ENCODE measurements at regions of chr6 and their contacts with region 1.

Region 1: DNA sequence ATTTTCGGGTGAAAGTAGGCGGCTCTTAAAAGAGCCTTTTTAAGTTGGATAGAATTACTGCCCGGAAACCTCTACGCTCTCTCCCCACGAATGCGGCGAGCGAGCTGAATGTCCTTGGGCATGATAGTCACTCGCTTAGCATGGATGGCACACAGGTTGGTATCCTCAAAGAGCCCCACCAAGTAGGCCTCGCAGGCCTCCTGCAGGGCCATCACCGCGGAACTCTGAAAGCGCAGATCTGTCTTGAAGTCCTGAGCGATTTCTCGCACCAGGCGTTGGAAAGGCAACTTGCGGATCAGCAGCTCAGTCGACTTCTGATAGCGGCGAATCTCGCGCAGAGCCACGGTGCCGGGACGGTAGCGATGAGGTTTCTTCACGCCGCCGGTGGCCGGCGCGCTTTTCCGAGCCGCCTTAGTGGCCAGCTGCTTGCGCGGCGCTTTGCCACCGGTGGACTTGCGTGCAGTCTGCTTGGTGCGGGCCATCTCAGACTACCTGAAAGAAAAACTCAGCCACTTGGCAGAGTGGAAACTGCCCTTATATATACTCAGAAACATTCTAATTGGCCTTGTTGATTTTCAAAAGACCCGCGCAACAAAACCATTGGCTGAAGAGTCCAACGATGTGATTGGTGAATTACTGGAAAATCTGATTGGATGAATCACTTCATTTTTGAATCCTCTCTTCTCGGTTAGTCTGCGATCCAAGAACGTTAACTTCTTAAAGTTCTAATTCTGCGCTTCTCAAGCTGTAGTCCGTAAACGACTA is 93.9 kb upstream of the BTN3A2 start:
- DNase-seq: peak; percentile 50 to 89 (median 85)
- ATAC-seq: peak; percentile 24
- H3K4me3 ChIP-seq: peak overlapping the region; percentile 83
- H3K4me3 Mint-ChIP-seq: no peak overlapping the region
- H3K27ac ChIP-seq: peak overlapping the region; percentile 82
- H3K27ac Mint-ChIP-seq: peak overlapping the region in 2 of 9 donors; percentile 10 to 91
- H3K4me1 ChIP-seq: peaks cover 6 to 27% of the 10 kb centered on the region in 2 donors
- H3K4me1 Mint-ChIP-seq: peaks cover 0 to 34% (median 15%) of the 10 kb centered on the region in 7 donors
- H3K27me3 ChIP-seq: no peaks in the 10 kb centered on the region
- H3K27me3 Mint-ChIP-seq: no peaks in the 10 kb centered on the region

Region 2: GRCh38 chr6:26103770-26104456 is 167.2 kb before region 1 on chr6:
- CTCF ChIA-PET with region 1: no interaction called
- POLR2A ChIA-PET with region 1: interaction called, 8 read pairs
- intact Hi-C with region 1: loop called in 1 of 2 experiments (anchors 5 kb)
- DNase-seq: peak; percentile 83 to 96 (median 95)
- ATAC-seq: peak; percentile 94
- H3K4me3 ChIP-seq: peak overlapping the region; percentile 40
- H3K4me3 Mint-ChIP-seq: peak overlapping the region; percentile 81 to 97 (median 89)
- H3K27ac ChIP-seq: peak overlapping the region; percentile 75
- H3K27ac Mint-ChIP-seq: peak overlapping the region; percentile 96 to 100 (median 98)
- H3K4me1 ChIP-seq: peaks cover 4 to 12% of the 10 kb centered on the region in 2 donors
- H3K4me1 Mint-ChIP-seq: peaks cover 7 to 25% (median 22%) of the 10 kb centered on the region in 7 donors
- H3K27me3 ChIP-seq: no peaks in the 10 kb centered on the region
- H3K27me3 Mint-ChIP-seq: peaks cover 0 to 3% (median 0%) of the 10 kb centered on the region in 5 donors

Region 3: GRCh38 chr6:26234421-26235296 is 36.4 kb before region 1 on chr6:
- CTCF ChIA-PET with region 1: interaction called, 5 read pairs
- POLR2A ChIA-PET with region 1: interaction called, 402 read pairs
- intact Hi-C with region 1: loop called in 1 of 2 experiments (anchors 1 kb)
- DNase-seq: peak; percentile 48 to 94 (median 85)
- ATAC-seq: peak; percentile 80
- H3K4me3 ChIP-seq: peak overlapping the region; percentile 93
- H3K4me3 Mint-ChIP-seq: peak overlapping the region; percentile 87 to 99 (median 94)
- H3K27ac ChIP-seq: peak overlapping the region; percentile 87
- H3K27ac Mint-ChIP-seq: peak overlapping the region; percentile 93 to 100 (median 98)
- H3K4me1 ChIP-seq: peaks cover under 1 to 18% of the 10 kb centered on the region in 2 donors
- H3K4me1 Mint-ChIP-seq: peaks cover 18 to 52% (median 38%) of the 10 kb centered on the region in 7 donors
- H3K27me3 ChIP-seq: no peaks in the 10 kb centered on the region
- H3K27me3 Mint-ChIP-seq: peaks cover 0 to 15% (median 0%) of the 10 kb centered on the region in 5 donors

Region 4: GRCh38 chr6:26304797-26305640 is 33.9 kb after region 1 on chr6:
- CTCF ChIA-PET with region 1: no interaction called
- POLR2A ChIA-PET with region 1: interaction called, 37 read pairs
- intact Hi-C with region 1: loop called (anchors 1 to 5 kb)
- DNase-seq: peak; percentile 36 to 80 (median 55)
- ATAC-seq: peak; percentile 83
- H3K4me3 ChIP-seq: peak overlapping the region; percentile 72
- H3K4me3 Mint-ChIP-seq: peak overlapping the region; percentile 85 to 95 (median 92)
- H3K27ac ChIP-seq: peak overlapping the region; percentile 61
- H3K27ac Mint-ChIP-seq: peak overlapping the region; percentile 62 to 96 (median 92)
- H3K4me1 ChIP-seq: peaks cover 0 to 10% of the 10 kb centered on the region in 2 donors
- H3K4me1 Mint-ChIP-seq: peaks cover 11 to 47% (median 24%) of the 10 kb centered on the region in 7 donors
- H3K27me3 ChIP-seq: no peaks in the 10 kb centered on the region
- H3K27me3 Mint-ChIP-seq: no peaks in the 10 kb centered on the region

Region 5: DNA sequence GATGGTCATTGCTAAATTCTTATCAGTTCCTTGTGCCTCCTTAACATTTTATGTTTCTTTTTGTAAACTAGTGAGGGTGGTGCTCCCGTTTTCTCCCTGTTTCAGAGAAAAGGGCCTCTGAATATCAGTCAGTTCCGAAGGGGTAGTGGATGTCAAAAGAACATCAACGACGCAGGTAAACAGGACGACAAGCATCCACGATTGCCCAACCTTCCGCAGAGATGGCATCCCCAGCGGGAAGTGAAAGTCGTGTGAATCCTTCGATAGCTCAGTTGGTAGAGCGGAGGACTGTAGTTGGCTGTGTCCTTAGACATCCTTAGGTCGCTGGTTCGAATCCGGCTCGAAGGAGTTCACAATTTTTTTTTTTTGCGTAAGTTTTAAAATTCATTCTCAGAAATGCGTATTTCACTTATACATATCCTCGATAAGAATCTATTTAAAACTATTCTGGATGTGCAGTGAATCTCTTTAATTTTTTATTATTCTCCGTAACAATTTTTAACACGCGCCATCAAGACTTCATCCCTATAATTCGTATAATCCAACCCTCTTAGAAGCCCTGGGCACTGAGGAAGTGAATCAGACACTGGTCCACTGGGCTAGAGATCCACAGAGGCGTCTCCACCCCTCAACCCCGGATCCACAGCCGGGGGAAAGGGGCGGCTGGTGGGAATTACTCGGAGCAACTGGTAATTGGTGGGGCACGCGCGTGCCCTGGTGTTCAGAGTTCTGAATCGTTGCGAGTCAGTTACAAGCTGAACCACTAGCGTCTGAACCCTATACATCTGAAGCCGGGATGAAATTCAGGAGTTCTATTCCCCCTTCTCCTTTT is 297.7 kb after region 1 on chr6:
- CTCF ChIA-PET with region 1: no interaction called
- POLR2A ChIA-PET with region 1: interaction called, 22 read pairs
- intact Hi-C with region 1: no loop called
- DNase-seq: peak; percentile 96 to 99 (median 98)
- ATAC-seq: peak; percentile 84
- H3K4me3 ChIP-seq: peak overlapping the region; percentile 90
- H3K4me3 Mint-ChIP-seq: peak overlapping the region; percentile 90 to 100 (median 95)
- H3K27ac ChIP-seq: peak overlapping the region; percentile 74
- H3K27ac Mint-ChIP-seq: peak overlapping the region; percentile 96 to 100 (median 99)
- H3K4me1 ChIP-seq: peaks cover 0 to 3% of the 10 kb centered on the region in 2 donors
- H3K4me1 Mint-ChIP-seq: peaks cover 11 to 42% (median 26%) of the 10 kb centered on the region in 7 donors
- H3K27me3 ChIP-seq: no peaks in the 10 kb centered on the region
- H3K27me3 Mint-ChIP-seq: peaks cover 0 to 12% (median 0%) of the 10 kb centered on the region in 5 donors

Region 6: GRCh38 chr6:27871924-27872638 is 1601.0 kb after region 1 on chr6:
- CTCF ChIA-PET with region 1: no interaction called
- POLR2A ChIA-PET with region 1: interaction called, 14 read pairs
- intact Hi-C with region 1: loop called in 1 of 2 experiments (anchors 2 kb)
- DNase-seq: peak; percentile 68 to 97 (median 94)
- ATAC-seq: peak; percentile 88
- H3K4me3 ChIP-seq: peak overlapping the region; percentile 69
- H3K4me3 Mint-ChIP-seq: peak overlapping the region; percentile 83 to 99 (median 94)
- H3K27ac ChIP-seq: peak overlapping the region; percentile 84
- H3K27ac Mint-ChIP-seq: peak overlapping the region; percentile 95 to 98 (median 97)
- H3K4me1 ChIP-seq: peaks cover under 1 to 19% of the 10 kb centered on the region in 2 donors
- H3K4me1 Mint-ChIP-seq: peaks cover 15 to 69% (median 42%) of the 10 kb centered on the region in 7 donors
- H3K27me3 ChIP-seq: no peaks in the 10 kb centered on the region
- H3K27me3 Mint-ChIP-seq: peaks cover 0 to 8% (median 0%) of the 10 kb centered on the region in 5 donors